Panc1 (cell line): ENCODE measurements at regions of chr9 and their contacts with region 1.

Region 1: GRCh38 chr9:29397148-29397547 is 1823.9 kb upstream of the C9orf72 start:
- DNase-seq: no peak
- ATAC-seq: no peak
- H3K4me3 ChIP-seq: no peak overlapping the region
- H3K27ac ChIP-seq: no peak overlapping the region
- H3K4me1 ChIP-seq: no peaks in the 10 kb centered on the region
- H3K27me3 ChIP-seq: no peaks in the 10 kb centered on the region
- CTCF ChIP-seq: no peak

Region 2: DNA sequence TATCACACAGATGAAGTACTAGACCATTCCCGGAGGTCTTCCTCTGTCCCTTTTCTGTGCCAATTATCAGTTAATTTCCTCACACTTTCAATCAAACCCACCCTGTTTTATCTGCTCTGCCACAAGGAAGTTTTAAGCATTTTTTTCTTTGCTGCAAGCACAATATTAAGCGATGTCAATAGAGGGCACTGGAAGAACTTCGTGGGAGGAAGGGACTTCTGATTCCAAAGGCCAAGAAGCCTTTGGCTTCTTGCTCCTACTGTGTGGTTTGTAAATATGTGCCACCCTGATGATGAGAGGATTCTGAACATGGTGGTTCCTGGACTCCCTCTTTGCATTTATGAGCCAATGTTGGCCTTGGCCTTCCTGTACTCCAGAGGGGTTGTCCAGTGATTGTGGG is 111.3 kb before region 1 on chr9:
- CTCF ChIA-PET with region 1: no interaction called
- POLR2A ChIA-PET with region 1: no interaction called
- in situ Hi-C with region 1: no loop called
- intact Hi-C with region 1: no loop called
- DNase-seq: no peak
- ATAC-seq: no peak
- H3K4me3 ChIP-seq: no peak overlapping the region
- H3K27ac ChIP-seq: no peak overlapping the region
- H3K4me1 ChIP-seq: no peaks in the 10 kb centered on the region
- H3K27me3 ChIP-seq: no peaks in the 10 kb centered on the region
- CTCF ChIP-seq: peak; percentile 12; the same call in 1 of the 2 replicates

Region 3: GRCh38 chr9:29349050-29349449 is 48.1 kb before region 1 on chr9:
- CTCF ChIA-PET with region 1: no interaction called
- POLR2A ChIA-PET with region 1: no interaction called
- in situ Hi-C with region 1: no loop called
- intact Hi-C with region 1: loop called (anchors 10 kb)
- DNase-seq: no peak
- ATAC-seq: no peak
- H3K4me3 ChIP-seq: no peak overlapping the region
- H3K27ac ChIP-seq: no peak overlapping the region
- H3K4me1 ChIP-seq: no peaks in the 10 kb centered on the region; the same call in 1 of the 2 replicates
- H3K27me3 ChIP-seq: no peaks in the 10 kb centered on the region
- CTCF ChIP-seq: no peak